ENCODE measurements at regions of chr7 and their contacts with region 1.

Region 1: DNA sequence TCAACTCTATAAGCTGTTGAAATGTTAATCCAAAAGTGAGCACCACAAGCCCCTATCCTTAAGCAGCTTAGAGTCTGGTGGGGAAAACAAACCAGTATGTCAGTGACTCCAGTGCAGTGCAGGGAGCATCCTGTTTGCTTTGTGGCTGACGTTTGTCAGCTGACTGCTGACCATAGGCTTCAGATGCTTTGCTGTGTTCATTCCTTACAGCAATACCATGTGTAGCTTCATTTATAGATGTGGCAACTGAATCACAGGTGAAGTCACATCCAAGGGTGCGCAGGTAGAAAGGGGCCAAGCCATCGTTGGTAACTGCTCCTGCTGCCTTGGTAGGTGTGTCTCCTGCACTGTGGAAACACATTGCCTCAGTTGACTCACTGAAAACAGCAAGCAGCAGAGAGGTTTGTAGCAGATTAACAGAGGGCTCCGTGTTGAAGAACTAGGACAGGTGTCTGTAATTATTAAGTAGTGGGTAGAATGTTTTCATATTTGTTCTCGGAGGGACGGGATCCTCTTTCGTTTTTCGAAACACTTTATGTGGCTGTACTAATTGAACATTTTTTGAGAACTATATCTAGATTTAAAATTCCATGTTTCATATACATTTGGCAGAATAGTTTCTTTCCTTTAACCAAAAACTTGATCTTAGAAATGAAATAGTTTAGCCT is 2.0 kb downstream of the INSIG1 start:
- DNase-seq: no peak
- H3K4me3 ChIP-seq: peak overlapping the region; percentile 98
- H3K27ac ChIP-seq: peak overlapping the region; percentile 85
- H3K27me3 ChIP-seq: no peaks in the 10 kb centered on the region
- CTCF ChIP-seq: no peak

Region 2: DNA sequence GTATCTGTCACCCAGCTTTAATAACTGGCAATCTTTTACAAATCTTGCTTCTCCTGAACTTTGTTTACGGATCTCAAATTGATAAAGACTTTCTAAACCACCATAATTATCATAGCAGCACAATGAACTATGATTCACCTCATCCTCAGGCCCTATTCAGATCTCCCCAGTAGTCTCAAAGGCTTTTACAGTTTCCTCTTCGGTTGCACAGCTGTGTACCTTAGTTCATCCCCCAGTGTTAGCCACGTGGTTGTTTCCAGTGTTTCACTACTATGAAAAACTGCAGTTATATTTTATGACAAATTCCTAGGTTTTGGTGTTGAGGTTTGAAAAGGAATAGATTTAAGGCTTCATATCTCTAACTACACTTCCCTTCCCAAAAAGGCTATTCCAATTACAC is 321.7 kb before region 1 on chr7:
- in situ Hi-C with region 1: no loop called
- DNase-seq: no peak
- H3K4me3 ChIP-seq: no peak overlapping the region
- H3K27ac ChIP-seq: no peak overlapping the region
- H3K27me3 ChIP-seq: no peaks in the 10 kb centered on the region
- CTCF ChIP-seq: no peak

Region 3: DNA sequence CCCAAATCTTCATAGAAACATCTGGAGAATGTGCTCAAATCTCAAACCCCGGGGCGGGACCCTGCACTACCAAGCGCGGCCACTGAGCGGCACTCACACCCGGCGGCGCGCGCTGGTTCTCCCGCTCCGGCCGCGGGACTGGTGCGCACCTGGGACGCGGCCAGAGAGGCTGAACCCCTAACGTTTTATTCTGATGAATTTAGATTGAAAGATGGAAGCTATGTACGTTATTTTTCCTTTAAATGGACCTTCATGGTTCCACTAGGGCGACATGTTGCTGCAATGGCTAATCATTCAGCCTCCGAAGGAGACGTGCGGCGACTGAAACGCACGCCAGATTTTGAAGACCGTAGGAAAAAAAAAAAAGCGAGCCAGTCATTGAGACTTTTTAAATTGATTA is 109.0 kb before region 1 on chr7:
- in situ Hi-C with region 1: loop called (anchors 5 kb)
- DNase-seq: peak; percentile 36
- H3K4me3 ChIP-seq: no peak overlapping the region
- H3K27ac ChIP-seq: no peak overlapping the region
- H3K27me3 ChIP-seq: no peaks in the 10 kb centered on the region
- CTCF ChIP-seq: peak; percentile 83

Measured in brain microvascular endothelial cell (primary cell).